Lower lobe of right lung (tissue), 2 donors: ENCODE measurements at regions of chr7 and their contacts with region 1.

Region 1: GRCh38 chr7:140517546-140518369 is 38.5 kb upstream of the MKRN1 start:
- DNase-seq: peak; percentile 89
- ATAC-seq: peak; percentile 92 to 95
- H3K4me3 ChIP-seq: no peak overlapping the region
- H3K27ac ChIP-seq: peak overlapping the region; percentile 46
- H3K4me1 ChIP-seq: peaks cover 13% of the 10 kb centered on the region
- H3K27me3 ChIP-seq: no peaks in the 10 kb centered on the region
- CTCF ChIP-seq: peak; percentile 84

Region 2: DNA sequence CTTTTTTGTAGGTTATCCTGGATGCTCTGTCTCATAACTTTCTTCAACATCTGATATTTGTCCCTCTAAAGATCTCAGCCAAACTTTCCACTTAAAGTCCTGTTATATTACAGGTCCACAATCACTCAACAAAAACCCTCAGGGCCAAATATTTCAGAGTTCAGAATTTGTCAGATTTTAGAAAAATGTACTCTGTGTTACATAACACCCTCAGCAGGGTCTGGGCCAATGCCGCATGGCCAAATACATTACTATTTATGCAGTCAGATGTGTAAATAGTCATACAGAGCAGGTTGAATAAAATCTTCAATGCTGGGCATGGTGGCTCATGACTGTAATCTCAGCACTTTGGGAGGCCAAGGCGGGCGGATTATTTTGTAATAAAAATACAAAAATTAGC is 102.4 kb before region 1 on chr7:
- intact Hi-C with region 1: no loop called
- DNase-seq: no peak
- ATAC-seq: no peak
- H3K4me3 ChIP-seq: no peak overlapping the region
- H3K27ac ChIP-seq: no peak overlapping the region
- H3K4me1 ChIP-seq: no peaks in the 10 kb centered on the region
- H3K27me3 ChIP-seq: no peaks in the 10 kb centered on the region
- CTCF ChIP-seq: no peak

Region 3: DNA sequence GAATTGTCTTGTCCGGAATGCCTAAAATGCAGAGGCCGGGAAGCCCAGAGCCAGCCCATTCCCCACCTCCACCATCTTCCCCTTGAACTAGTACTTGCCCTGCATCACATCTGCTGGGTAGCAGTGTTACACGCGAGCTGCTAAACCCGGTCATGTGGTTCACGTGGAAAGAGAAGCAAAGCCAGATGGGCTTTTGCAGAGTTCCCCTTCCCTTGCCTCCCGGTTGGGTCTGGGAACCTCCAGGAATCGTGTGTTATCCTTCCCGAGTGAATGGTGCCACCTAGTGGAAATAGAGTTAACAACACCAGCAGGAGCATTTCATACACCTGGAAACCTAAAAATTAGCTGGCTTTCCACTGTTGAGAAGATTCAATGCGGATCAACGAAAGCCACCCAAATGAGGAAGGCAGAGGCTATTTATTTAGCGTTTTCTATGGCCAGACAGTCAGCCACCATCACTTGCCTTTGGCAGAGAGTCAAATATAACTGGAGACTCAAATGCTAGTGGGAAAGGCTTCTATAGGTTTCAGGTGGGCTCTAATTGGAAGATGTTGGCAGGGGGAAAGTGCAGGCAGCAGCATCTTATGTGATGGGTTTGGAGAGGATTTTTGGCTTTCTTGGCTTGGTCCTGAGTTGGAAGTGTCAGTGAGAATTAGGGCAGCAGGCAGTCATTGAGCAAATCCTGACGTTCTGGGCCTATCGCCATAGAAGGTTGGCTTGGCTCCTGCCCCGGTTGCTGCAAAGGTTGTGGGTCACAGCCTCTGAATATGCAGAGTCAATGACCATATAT is 135.8 kb after region 1 on chr7:
- intact Hi-C with region 1: loop called (anchors 5 kb)
- DNase-seq: no peak
- ATAC-seq: peak; percentile 74 to 76
- H3K4me3 ChIP-seq: no peak overlapping the region
- H3K27ac ChIP-seq: no peak overlapping the region
- H3K4me1 ChIP-seq: peaks cover 21% of the 10 kb centered on the region
- H3K27me3 ChIP-seq: no peaks in the 10 kb centered on the region
- CTCF ChIP-seq: peak; percentile 87